ENCODE measurements at regions of chr10 and their contacts with region 1.

Region 1: GRCh38 chr10:80081931-80082750 is 3.7 kb downstream of the TMEM254 start:
- DNase-seq: no peak
- H3K4me3 ChIP-seq: no peak overlapping the region
- H3K27ac ChIP-seq: no peak overlapping the region
- H3K4me1 ChIP-seq: no peaks in the 10 kb centered on the region
- CTCF ChIP-seq: no peak

Region 2: GRCh38 chr10:79347894-79348639 is 734.1 kb before region 1 on chr10:
- CTCF ChIA-PET with region 1: no interaction called
- POLR2A ChIA-PET with region 1: no interaction called
- intact Hi-C with region 1: no loop called
- DNase-seq: peak; percentile 80
- H3K4me3 ChIP-seq: peak overlapping the region; percentile 96
- H3K27ac ChIP-seq: peak overlapping the region; percentile 78
- H3K4me1 ChIP-seq: peaks cover 30% of the 10 kb centered on the region
- CTCF ChIP-seq: no peak

Region 3: GRCh38 chr10:80344912-80345311 is 262.8 kb after region 1 on chr10:
- CTCF ChIA-PET with region 1: no interaction called
- POLR2A ChIA-PET with region 1: no interaction called
- intact Hi-C with region 1: loop called (anchors 5 kb)
- DNase-seq: no peak
- H3K4me3 ChIP-seq: no peak overlapping the region
- H3K27ac ChIP-seq: no peak overlapping the region
- H3K4me1 ChIP-seq: no peaks in the 10 kb centered on the region
- CTCF ChIP-seq: no peak

Measured in OCI-LY7 (cell line).